AG04450 (cell line): ENCODE measurements at regions of chrX and their contacts with region 1.

Region 1: DNA sequence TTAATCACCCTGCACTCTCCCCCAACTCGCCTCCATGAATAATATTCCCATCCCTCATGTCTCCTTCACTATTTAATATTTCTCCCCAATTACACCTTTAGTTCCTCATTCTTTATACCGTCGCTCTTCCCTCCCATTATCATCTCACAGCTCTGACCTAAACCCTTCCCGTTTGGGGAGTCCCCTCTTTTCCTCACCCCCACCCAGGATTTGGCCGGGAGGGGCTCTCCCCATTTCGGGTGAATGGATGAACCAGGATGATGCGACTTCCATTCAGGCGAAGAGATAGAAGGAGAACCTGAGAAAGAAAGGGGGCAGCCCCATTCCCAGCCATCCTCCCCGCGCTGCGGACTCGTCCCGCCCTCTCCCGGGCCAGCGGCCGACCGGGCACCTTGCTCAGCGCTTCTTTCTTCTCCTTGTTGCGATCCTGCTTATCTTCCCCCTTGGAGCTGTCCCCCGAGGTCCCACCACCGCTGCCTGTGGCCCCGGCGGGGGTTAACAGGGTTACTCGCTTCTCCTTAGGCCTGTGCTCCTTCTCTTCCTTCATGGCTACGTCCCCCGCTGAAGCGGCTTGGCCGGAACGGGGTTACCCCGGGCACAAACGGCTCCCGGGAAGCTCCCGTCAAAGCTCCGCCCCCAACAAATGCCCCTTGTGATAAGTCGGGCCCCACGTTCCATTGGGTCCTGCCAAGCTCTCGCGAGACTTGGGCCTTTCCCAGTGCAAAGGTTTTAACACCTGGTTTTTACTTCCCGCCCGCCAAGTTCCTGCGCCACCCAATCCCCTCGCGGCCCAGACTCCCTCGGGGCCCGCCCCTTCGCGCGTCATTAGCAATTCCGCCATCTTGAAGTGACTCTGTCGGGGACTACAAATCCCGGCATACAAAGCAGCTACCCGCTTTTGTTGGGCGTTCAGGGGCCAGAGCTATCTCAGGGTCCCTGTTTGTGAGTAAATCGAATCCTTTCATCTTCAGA is at the start of gene UPF3B:
- DNase-seq: peak; percentile 96
- H3K4me3 ChIP-seq: peak within 1 kb of the TSS; percentile 72
- H3K27ac ChIP-seq: peak within 1 kb of the TSS; percentile 77
- H3K27me3 ChIP-seq: no peaks in the 10 kb centered on the region
- CTCF ChIP-seq: no peak
- polyA plus RNA-seq, gene UPF3B: 7.5 and 12.4 TPM in 2 replicates

Region 2: DNA sequence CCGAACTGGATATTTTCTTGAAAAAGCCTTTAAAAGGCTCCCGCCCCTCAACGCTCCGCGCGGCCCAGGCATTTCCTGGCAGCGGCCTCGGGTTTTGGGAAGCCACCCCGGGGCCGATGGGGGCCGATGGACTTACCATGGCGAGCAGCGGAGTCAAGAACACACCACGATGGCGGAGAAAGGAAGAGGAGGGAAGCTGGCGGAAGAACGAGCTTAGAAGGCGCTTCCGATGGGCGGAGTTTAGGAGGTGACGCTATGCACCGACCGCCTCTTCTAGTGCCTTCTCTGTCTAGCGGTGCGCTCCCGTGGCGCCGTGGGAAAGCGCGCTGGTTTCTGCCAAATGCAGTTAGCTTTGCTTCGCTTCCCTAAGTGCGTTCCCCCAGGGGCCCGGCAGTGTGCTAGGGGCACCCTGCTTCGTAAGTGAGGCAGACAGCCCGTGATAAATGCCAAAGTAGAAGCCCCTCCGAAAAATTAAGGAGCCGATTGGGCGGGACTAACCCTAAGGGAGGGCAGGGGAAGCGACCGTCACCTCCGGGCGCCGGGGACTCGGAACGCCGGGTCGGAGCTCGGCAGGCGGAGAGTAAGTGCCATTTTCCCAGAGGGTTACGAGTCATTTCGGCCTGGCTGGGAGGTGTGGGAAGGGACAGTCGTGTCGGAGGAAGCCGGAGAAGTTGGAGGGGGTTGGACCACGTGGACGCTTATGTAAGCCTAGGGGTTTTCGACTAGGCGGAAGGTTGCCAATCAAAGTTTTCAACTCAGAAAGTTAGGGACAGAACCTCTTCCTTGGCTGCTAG is 61.0 kb before region 1 on chrX and contains the start of gene RPL39:
- CTCF ChIA-PET with region 1: interaction called, 3 read pairs
- POLR2A ChIA-PET with region 1: interaction called, 28 read pairs
- DNase-seq: peak; percentile 55
- H3K4me3 ChIP-seq: peak within 1 kb of the TSS; percentile 75
- H3K27ac ChIP-seq: peak within 1 kb of the TSS; percentile 75
- H3K27me3 ChIP-seq: no peaks in the 10 kb centered on the region
- CTCF ChIP-seq: no peak
- polyA plus RNA-seq, gene RPL39: 1,814 and 2,333 TPM in 2 replicates